HepG2 (cell line): ENCODE measurements at regions of chr3 and their contacts with region 1.

Region 1: DNA sequence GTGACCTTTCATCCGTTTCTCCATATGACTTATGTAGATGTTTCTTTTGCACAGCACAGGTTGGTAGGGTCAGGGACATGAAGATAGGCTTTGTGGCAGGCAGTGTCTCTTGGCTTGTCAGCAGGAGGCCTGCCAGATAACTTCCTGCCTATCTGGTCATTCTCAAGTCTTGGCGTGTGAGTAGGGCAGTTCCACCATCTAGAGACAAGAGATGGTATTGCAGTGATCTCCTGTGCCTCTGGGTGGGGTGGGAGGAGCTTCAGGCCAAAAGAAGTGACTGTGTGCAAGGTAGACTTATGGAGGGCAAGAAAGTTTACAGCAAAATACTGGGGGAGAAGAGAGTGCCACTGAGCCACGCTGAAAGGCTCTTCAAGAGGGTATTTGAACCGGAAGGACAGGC is 11.0 kb downstream of the TEX264 start:
- DNase-seq: peak; percentile 81
- ATAC-seq: peak; percentile 93
- H3K4me3 ChIP-seq: no peak overlapping the region
- H3K27ac ChIP-seq: no peak overlapping the region
- H3K4me1 ChIP-seq: 0 out of 2 replicates have a peak, but pooled peaks cover 12% of the 10 kb centered on the region
- H3K27me3 ChIP-seq: no peaks in the 10 kb centered on the region
- CTCF ChIP-seq: peak; percentile 92
- EP300 ChIP-seq: no peak
- POLR2A ChIP-seq: no peak
- RAD21 ChIP-seq: peak; percentile 73

Region 2: GRCh38 chr3:51637941-51638471 is 44.1 kb before region 1 on chr3:
- CTCF ChIA-PET with region 1: interaction called, 11 read pairs
- POLR2A ChIA-PET with region 1: no interaction called
- in situ Hi-C with region 1: loop called (anchors 5 kb)
- intact Hi-C with region 1: loop called (anchors 1 kb)
- DNase-seq: peak; percentile 74
- ATAC-seq: peak; percentile 99
- H3K4me3 ChIP-seq: no peak overlapping the region
- H3K27ac ChIP-seq: no peak overlapping the region
- H3K4me1 ChIP-seq: no peaks in the 10 kb centered on the region
- H3K27me3 ChIP-seq: no peaks in the 10 kb centered on the region
- CTCF ChIP-seq: peak; percentile 90
- EP300 ChIP-seq: no peak
- POLR2A ChIP-seq: no peak
- RAD21 ChIP-seq: peak; percentile 85

Region 3: DNA sequence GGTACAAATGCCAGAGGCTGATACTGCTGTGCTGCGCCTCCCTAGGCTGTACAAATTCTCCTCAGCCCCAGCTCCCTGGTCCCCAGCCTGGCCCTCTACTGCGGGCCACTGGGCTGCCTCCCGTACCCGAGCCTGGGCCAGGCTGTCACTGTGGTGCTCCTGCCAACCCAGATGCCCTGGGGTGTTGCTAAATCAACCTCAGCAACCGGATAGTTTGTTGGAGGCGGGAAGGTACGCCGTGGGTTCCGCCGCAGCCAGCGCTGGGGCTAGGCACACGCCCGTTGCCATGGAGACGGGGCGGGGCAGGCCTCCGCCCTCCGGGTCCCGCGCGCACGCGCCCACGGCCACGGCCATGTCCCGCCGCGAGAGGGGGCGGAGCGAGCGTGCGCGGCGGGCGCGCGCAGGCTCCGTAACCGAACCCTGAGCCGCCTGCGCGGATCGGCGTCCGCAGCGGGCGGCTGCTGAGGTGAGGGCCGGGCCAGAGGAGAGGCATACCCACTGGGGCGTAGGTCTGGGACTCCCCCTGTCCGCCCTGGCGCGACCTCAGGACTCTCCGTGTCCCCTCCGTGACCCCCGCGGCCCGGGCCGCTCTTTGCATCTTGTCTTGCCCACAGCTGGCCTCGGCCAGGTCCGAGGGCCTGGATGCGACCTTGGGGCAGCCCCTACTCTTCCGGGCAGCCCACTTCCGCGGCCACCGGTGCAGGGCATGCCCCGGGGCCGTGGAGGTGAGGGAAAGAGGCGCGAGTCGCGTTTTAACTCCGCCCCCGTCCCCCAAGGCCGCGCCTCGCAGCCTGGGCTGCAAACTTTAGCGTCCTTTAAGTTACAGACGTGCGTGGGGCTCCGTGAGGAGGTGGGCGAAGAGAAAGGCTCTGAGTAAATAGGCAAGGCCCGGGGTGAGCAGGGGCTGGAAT is 11.0 kb before region 1 on chr3 and contains the start of gene TEX264:
- CTCF ChIA-PET with region 1: interaction called, 5 read pairs
- POLR2A ChIA-PET with region 1: interaction called, 13 read pairs
- in situ Hi-C with region 1: no loop called
- intact Hi-C with region 1: no loop called
- DNase-seq: peak; percentile 59
- ATAC-seq: peak; percentile 76
- H3K4me3 ChIP-seq: peak within 1 kb of the TSS; percentile 79 to 99 (median 80)
- H3K27ac ChIP-seq: peak within 1 kb of the TSS; percentile 89
- H3K4me1 ChIP-seq: peaks cover 44% of the 10 kb centered on the region
- H3K27me3 ChIP-seq: no peaks in the 10 kb centered on the region
- CTCF ChIP-seq: 0 out of 2 replicates have a peak, but pooled peaks have one; percentile 6
- EP300 ChIP-seq: no peak
- POLR2A ChIP-seq: peak; percentile 76 to 89
- RAD21 ChIP-seq: peak; percentile 43; the same call in 1 of the 2 replicates
- total RNA-seq, gene TEX264: 18.8 and 35.2 TPM in 2 replicates